Natural killer cell (primary cell): ENCODE measurements at regions of chr4 and their contacts with region 1.

Region 1: GRCh38 chr4:2036866-2037265 is 22.3 kb upstream of the NAT8L start:
- DNase-seq: no peak
- ATAC-seq: no peak
- H3K4me3 ChIP-seq: no peak overlapping the region
- H3K4me3 Mint-ChIP-seq: no peak overlapping the region
- H3K27ac ChIP-seq: no peak overlapping the region
- H3K27ac Mint-ChIP-seq: no peak overlapping the region
- H3K4me1 ChIP-seq: peaks cover 12% of the 10 kb centered on the region
- H3K4me1 Mint-ChIP-seq: no peaks in the 10 kb centered on the region
- H3K27me3 ChIP-seq: peaks cover 5% of the 10 kb centered on the region
- H3K27me3 Mint-ChIP-seq: peaks cover 37 to 41% of the 10 kb centered on the region in 2 donors
- CTCF ChIP-seq: no peak

Region 2: GRCh38 chr4:2247128-2248043 is 210.5 kb after region 1 on chr4:
- intact Hi-C with region 1: no loop called
- DNase-seq: peak in 1 of 2 donors; percentile 14
- ATAC-seq: peak in 1 of 3 donors; percentile 4
- H3K4me3 ChIP-seq: no peak overlapping the region
- H3K4me3 Mint-ChIP-seq: no peak overlapping the region
- H3K27ac ChIP-seq: no peak overlapping the region
- H3K27ac Mint-ChIP-seq: no peak overlapping the region
- H3K4me1 ChIP-seq: peaks cover 13% of the 10 kb centered on the region
- H3K4me1 Mint-ChIP-seq: peaks cover 7 to 18% of the 10 kb centered on the region in 2 donors
- H3K27me3 ChIP-seq: no peaks in the 10 kb centered on the region
- H3K27me3 Mint-ChIP-seq: no peaks in the 10 kb centered on the region
- CTCF ChIP-seq: no peak

Region 3: DNA sequence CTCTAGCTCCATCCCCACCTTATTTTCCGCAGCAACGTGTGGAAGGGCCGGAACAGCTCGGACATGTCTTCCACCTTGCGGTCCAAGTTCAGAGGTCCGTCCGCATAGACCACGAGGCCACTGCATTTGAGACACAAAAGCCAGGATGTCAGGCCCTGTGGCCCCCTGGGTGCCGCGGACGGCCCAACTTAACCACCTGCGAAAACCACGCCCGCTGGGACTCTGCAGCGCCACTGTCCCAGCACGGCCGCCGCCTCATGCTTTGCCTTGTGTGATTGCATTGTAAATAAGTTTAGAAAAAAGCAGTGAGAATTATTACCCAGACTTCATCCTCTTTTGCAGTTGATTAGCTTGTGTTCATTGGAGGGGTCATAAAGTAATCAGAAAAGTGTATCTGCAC is 283.3 kb after region 1 on chr4:
- intact Hi-C with region 1: loop called (anchors 5 kb)
- DNase-seq: peak; percentile 58 to 63
- ATAC-seq: peak; percentile 73 to 94 (median 93)
- H3K4me3 ChIP-seq: no peak overlapping the region
- H3K4me3 Mint-ChIP-seq: peak overlapping the region; percentile 62
- H3K27ac ChIP-seq: no peak overlapping the region
- H3K27ac Mint-ChIP-seq: peak overlapping the region; percentile 37 to 62
- H3K4me1 ChIP-seq: peaks cover 34% of the 10 kb centered on the region
- H3K4me1 Mint-ChIP-seq: peaks cover 30 to 47% of the 10 kb centered on the region in 2 donors
- H3K27me3 ChIP-seq: peaks cover 23% of the 10 kb centered on the region
- H3K27me3 Mint-ChIP-seq: peaks cover 10 to 20% of the 10 kb centered on the region in 2 donors
- CTCF ChIP-seq: no peak